ENCODE measurements at regions of chr4 and their contacts with region 1.

Region 1: GRCh38 chr4:157978680-157979361 is 194.0 kb downstream of the GASK1B start:
- DNase-seq: peak; percentile 39
- CTCF ChIP-seq: peak; percentile 75

Region 2: GRCh38 chr4:157689476-157689875 is 289.3 kb before region 1 on chr4:
- CTCF ChIA-PET with region 1: no interaction called
- POLR2A ChIA-PET with region 1: no interaction called
- DNase-seq: no peak
- CTCF ChIP-seq: no peak

Region 3: GRCh38 chr4:157854819-157855218 is 124.0 kb before region 1 on chr4:
- CTCF ChIA-PET with region 1: no interaction called
- POLR2A ChIA-PET with region 1: no interaction called
- DNase-seq: no peak
- CTCF ChIP-seq: no peak

Region 4: GRCh38 chr4:157942017-157942416 is 36.8 kb before region 1 on chr4:
- CTCF ChIA-PET with region 1: no interaction called
- POLR2A ChIA-PET with region 1: no interaction called
- DNase-seq: no peak
- CTCF ChIP-seq: no peak

Region 5: DNA sequence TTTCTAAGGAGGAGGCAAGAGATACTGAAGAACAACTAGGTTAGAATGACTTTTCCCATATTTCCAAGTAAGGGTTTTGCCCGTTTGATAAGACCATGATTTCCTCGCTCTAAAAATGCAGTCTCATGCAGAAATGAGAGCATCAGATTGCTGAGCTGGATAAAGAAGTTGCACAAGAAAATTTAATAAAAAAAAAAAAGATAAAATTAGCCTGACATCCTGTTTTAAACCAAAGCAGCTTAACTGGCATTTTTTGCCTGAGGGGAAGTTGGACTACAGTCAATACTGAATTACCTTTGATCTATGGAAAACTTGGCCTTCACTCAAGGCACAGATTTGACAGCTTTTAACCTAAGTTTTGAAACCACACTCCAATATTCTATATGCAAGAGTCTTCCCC is 14.4 kb before region 1 on chr4:
- CTCF ChIA-PET with region 1: interaction called, 19 read pairs
- POLR2A ChIA-PET with region 1: no interaction called
- DNase-seq: no peak
- CTCF ChIP-seq: no peak

Region 6: DNA sequence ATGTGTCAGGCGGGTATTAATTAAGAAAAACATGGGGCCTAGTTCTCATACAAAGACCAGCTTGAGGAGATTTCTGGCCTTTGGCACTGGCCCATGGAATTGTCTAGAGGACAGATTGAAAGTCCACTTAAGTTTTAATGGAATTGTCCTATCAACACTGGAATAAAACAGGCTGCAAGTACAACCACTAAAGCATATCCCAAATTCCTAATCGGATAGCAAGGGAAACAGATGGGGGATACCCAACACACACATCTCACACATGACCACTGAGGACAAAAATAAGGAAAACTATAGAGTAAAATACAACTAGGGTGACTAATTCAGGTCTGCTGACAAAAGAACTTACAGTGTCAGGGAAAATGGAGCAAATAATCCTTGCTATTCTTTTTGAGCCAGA is 26.2 kb after region 1 on chr4:
- CTCF ChIA-PET with region 1: no interaction called
- POLR2A ChIA-PET with region 1: no interaction called
- DNase-seq: no peak
- CTCF ChIP-seq: no peak